Left ventricle myocardium superior (tissue), 1 donor: ENCODE measurements at regions of chr12 and their contacts with region 1.

Region 1: GRCh38 chr12:96516472-96517430 is 27.4 kb downstream of the CFAP54 start:
- DNase-seq: peak; percentile 81
- ATAC-seq: peak; percentile 62

Region 2: DNA sequence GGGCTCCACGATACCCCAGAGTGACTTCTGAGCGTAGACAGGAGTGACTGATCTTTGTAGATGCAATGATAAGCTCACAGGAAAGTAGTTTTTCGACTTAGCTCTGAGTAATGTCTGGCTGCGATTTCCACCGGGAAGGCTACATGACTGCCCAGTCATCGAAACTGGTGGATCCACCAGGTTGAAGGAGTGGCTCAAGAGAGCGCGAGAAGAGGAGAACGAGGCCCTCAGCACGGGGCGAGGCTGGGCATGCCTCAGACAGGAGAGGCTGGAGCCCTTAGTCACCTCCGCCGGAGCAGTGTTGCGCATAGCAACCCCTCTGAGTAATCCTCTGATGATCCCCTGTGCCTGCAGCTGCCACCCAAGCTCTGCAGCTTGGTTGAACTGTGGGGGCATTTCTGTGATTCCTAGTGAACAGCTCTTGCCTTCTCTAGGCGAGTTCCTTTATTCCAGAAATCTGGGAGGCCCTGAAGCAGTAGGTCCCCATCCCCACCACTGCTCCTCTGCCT is 297.0 kb before region 1 on chr12:
- intact Hi-C with region 1: loop called (anchors 10 kb)
- DNase-seq: no peak
- ATAC-seq: no peak